A673 (cell line): ENCODE measurements at regions of chr12 and their contacts with region 1.

Region 1: DNA sequence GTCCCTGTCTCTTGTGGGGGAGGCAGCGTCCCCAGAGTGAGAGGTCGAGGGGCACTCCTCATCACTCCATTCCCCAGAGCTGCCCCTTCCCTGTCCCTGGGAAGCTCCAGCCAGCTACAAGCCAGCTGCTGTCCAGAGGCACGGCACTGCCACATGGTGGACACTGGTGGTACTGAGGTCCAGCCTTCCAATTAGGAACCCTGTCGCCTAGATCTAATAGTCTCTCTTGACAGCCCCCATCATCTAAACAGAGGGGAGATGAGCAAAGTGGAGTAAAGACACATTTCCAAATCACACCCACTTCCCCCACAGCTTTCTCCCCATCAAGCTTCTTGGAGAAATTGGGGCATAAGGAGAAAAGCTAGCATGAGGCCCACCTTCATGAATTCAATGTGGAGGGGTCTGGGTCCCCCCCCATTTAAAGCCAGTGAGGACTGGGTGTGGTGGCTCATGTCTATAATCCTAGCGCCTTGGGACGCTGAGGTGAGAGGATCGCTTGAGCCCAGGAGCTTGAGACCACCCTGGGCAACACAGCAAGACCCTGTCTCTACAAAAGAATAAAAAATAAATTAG is 2.1 kb upstream of the INHBE start:
- DNase-seq: peak; percentile 82
- H3K4me3 ChIP-seq: no peak overlapping the region
- H3K27ac ChIP-seq: no peak overlapping the region
- H3K4me1 ChIP-seq: peaks cover 29% of the 10 kb centered on the region
- H3K27me3 ChIP-seq: no peaks in the 10 kb centered on the region
- CTCF ChIP-seq: peak; percentile 88

Region 2: DNA sequence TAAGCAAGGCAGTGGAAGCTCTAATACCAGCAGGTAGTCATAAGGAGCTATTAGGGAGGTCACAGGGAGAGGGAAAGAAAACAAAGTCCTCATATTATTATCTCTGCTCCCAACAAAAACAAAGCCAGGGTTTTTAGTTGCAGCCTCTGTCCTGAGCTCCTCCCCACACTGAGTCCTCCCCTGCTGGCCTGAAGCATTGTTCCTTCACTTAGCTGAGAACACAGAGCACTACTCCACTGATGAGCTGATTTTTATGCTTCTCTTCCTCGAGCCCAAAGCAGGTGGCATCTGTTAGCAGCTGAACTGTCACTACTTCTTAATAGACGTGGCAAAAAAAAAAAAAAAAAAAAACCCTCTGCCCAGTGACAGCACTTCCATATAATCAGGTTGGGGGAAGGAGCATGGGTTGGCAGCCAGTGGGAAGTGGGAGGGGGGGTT is 191.6 kb before region 1 on chr12:
- CTCF ChIA-PET with region 1: no interaction called
- POLR2A ChIA-PET with region 1: no interaction called
- intact Hi-C with region 1: loop called (anchors 1 kb)
- DNase-seq: no peak
- H3K4me3 ChIP-seq: no peak overlapping the region
- H3K27ac ChIP-seq: no peak overlapping the region
- H3K4me1 ChIP-seq: no peaks in the 10 kb centered on the region
- H3K27me3 ChIP-seq: no peaks in the 10 kb centered on the region
- CTCF ChIP-seq: no peak

Region 3: GRCh38 chr12:57309420-57309819 is 143.6 kb before region 1 on chr12:
- CTCF ChIA-PET with region 1: interaction called, 57 read pairs
- POLR2A ChIA-PET with region 1: interaction called, 10 read pairs
- intact Hi-C with region 1: loop called (anchors 1 kb)
- DNase-seq: no peak
- H3K4me3 ChIP-seq: no peak overlapping the region
- H3K27ac ChIP-seq: no peak overlapping the region
- H3K4me1 ChIP-seq: no peaks in the 10 kb centered on the region
- H3K27me3 ChIP-seq: no peaks in the 10 kb centered on the region
- CTCF ChIP-seq: no peak